ENCODE measurements at regions of chr7 and their contacts with region 1.

Region 1: GRCh38 chr7:158976849-158977593 is 120.7 kb downstream of the DYNC2I1 start:
- DNase-seq: peak; percentile 92 to 95 (median 93)
- ATAC-seq: peak; percentile 87
- H3K4me3 ChIP-seq: peak overlapping the region; percentile 27
- H3K27ac ChIP-seq: no peak overlapping the region; the same call in 2 of the 3 replicates
- H3K4me1 ChIP-seq: peaks cover 20 to 40% of the 10 kb centered on the region in 2 experiments
- H3K27me3 ChIP-seq: peaks cover 23 to 27% of the 10 kb centered on the region in 2 experiments
- CTCF ChIP-seq: peak; percentile 92 to 99 (median 97)
- EP300 ChIP-seq: no peak
- POLR2A ChIP-seq: no peak
- RAD21 ChIP-seq: peak; percentile 95 to 96

Region 2: GRCh38 chr7:158495786-158496185 is 481.2 kb before region 1 on chr7:
- CTCF ChIA-PET with region 1: no interaction called
- POLR2A ChIA-PET with region 1: no interaction called
- in situ Hi-C with region 1: no loop called
- intact Hi-C with region 1: loop called (anchors 5 kb)
- DNase-seq: peak in 1 of 4 experiments; percentile 20
- ATAC-seq: peak; percentile 56
- H3K4me3 ChIP-seq: no peak overlapping the region
- H3K27ac ChIP-seq: no peak overlapping the region
- H3K4me1 ChIP-seq: peaks cover 0 to 3% of the 10 kb centered on the region in 2 experiments; a peak in 2 of 5 replicates
- H3K27me3 ChIP-seq: peaks cover 21 to 36% of the 10 kb centered on the region in 2 experiments
- CTCF ChIP-seq: peak; percentile 24 to 33 (median 30); a peak in 4 of 6 replicates
- EP300 ChIP-seq: no peak
- POLR2A ChIP-seq: no peak
- RAD21 ChIP-seq: peak in 1 of 2 experiments; percentile 50; a peak in 2 of 4 replicates

Region 3: DNA sequence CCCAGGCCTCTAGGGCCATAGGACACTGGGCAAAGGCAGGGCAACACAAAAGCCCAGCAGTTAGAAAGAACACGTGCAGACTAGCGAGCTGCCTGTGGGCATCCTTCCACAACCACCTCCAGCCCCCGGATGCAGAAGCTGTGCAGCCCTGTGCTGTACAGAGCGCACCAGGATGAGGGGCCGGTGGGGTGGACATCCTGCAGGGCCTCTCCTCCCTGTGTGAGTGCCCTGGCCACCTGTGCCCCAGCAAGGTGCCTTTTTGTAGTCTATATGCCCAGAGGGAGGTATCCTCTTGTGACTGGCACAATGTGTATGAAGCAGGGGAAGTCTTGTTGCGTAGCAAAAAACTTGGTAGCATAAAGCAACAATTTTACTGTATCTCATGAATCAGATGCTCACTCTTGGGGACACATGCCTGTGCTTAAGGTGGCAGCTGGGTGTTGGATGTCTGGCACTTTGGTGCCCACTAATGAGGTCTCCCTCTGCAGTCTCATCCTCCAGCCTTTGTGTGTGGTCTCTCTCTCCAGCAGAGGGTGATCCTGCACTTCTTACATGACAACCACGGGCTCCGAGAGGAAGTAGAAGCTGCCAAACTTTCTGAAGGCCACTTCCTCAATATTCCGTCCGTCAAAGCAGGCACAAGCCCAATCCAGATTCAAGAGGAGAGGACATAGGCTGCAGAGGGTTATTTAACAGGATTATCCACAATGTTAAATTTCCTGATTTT is 281.1 kb before region 1 on chr7:
- CTCF ChIA-PET with region 1: interaction called, 33 read pairs
- POLR2A ChIA-PET with region 1: no interaction called
- in situ Hi-C with region 1: loop called (anchors 10 kb)
- intact Hi-C with region 1: loop called (anchors 1 kb)
- DNase-seq: peak in 3 of 4 experiments; percentile 23 to 67 (median 54)
- ATAC-seq: peak; percentile 72
- H3K4me3 ChIP-seq: no peak overlapping the region
- H3K27ac ChIP-seq: no peak overlapping the region
- H3K4me1 ChIP-seq: peaks cover under 1 to 3% of the 10 kb centered on the region in 2 experiments; a peak in 1 of 5 replicates
- H3K27me3 ChIP-seq: no peaks in the 10 kb centered on the region
- CTCF ChIP-seq: peak; percentile 65 to 89 (median 78)
- EP300 ChIP-seq: no peak
- POLR2A ChIP-seq: no peak
- RAD21 ChIP-seq: peak; percentile 86 to 97

Region 4: DNA sequence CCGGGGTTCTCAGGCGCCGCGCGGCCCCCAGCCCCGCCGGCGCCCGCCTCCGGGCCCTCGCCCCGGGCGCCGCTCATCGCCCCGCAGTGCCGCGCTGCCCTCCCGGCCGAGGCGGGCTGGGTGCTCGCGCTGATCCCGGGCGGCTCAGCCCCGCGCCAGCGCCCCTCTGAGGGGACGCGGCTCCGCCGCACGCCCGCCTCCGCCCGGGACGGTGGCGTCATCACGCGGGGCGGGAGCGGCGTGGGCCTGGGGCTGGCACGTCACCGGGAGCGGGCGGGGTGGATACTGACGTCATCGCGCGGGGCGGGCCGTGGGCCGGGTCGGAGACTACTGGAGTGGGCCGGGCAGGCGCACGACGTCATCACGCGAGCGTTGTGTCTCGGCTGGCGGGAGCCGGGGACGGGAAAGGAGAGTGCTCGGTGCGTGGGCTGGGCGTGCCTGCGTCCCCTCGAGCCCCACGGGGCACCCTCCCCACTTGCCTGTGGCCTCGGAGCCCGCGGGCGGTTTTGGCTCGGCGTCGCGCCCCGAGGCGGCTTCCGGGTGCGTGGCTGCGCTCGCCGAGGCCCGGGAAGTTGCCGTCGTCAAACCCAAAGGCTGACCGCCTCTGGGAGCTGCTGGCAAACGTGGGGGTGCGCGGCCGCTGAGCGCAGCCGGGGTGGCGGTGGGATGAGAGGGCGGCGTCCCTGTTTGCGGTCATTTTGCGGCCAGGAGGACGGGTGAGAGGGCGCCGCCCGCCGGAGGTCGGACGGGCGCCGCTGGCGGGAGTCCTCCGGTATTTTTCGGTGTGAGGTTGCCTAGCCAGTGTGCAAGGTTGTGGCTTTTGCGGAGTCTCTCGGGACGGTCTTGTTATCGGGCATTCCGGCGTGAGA is 147.4 kb before region 1 on chr7 and contains the start of gene ESYT2:
- CTCF ChIA-PET with region 1: no interaction called
- POLR2A ChIA-PET with region 1: interaction called, 3 read pairs
- in situ Hi-C with region 1: no loop called
- intact Hi-C with region 1: loop called (anchors 5 kb)
- DNase-seq: peak; percentile 99 to 100 (median 100)
- ATAC-seq: peak; percentile 82
- H3K4me3 ChIP-seq: peak within 1 kb of the TSS; percentile 67
- H3K27ac ChIP-seq: peak within 1 kb of the TSS; percentile 98
- H3K4me1 ChIP-seq: peaks cover 34 to 37% of the 10 kb centered on the region in 2 experiments
- H3K27me3 ChIP-seq: no peaks in the 10 kb centered on the region
- CTCF ChIP-seq: peak; percentile 58 to 73 (median 63)
- EP300 ChIP-seq: peak; percentile 56
- POLR2A ChIP-seq: peak; percentile 98
- RAD21 ChIP-seq: peak in 1 of 2 experiments; percentile 56
- polyA plus RNA-seq, gene ESYT2: 5.8 to 8.3 TPM

Region 5: DNA sequence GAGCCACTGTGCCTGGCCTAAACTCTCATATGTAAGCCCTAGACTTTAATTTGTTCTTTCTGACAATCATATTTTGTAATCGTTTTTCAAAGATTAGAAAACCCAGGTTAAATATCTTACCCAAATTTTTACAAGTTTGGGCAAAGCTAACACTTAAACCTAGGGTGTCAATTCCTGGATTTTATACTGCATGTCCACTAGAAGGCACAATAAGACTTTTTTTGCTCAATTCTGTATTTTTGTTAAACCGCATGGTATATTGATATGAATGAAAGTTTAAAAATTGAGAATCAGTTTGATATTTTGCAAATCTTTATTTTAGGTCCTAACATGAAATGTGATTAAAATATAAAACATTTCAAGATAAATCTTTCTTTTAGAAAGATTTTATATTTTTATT is 91.4 kb before region 1 on chr7:
- CTCF ChIA-PET with region 1: interaction called, 8 read pairs
- POLR2A ChIA-PET with region 1: no interaction called
- in situ Hi-C with region 1: no loop called
- intact Hi-C with region 1: loop called (anchors 2 kb)
- DNase-seq: peak in 2 of 4 experiments; percentile 43 to 52
- ATAC-seq: peak; percentile 77
- H3K4me3 ChIP-seq: no peak overlapping the region
- H3K27ac ChIP-seq: no peak overlapping the region
- H3K4me1 ChIP-seq: no peaks in the 10 kb centered on the region
- H3K27me3 ChIP-seq: no peaks in the 10 kb centered on the region
- CTCF ChIP-seq: peak; percentile 42 to 80 (median 50); a peak in 4 of 6 replicates
- EP300 ChIP-seq: no peak
- POLR2A ChIP-seq: no peak
- RAD21 ChIP-seq: peak; percentile 66 to 75

Measured in K562 (cell line).